ENCODE measurements at regions of chr6 and their contacts with region 1.

Region 1: DNA sequence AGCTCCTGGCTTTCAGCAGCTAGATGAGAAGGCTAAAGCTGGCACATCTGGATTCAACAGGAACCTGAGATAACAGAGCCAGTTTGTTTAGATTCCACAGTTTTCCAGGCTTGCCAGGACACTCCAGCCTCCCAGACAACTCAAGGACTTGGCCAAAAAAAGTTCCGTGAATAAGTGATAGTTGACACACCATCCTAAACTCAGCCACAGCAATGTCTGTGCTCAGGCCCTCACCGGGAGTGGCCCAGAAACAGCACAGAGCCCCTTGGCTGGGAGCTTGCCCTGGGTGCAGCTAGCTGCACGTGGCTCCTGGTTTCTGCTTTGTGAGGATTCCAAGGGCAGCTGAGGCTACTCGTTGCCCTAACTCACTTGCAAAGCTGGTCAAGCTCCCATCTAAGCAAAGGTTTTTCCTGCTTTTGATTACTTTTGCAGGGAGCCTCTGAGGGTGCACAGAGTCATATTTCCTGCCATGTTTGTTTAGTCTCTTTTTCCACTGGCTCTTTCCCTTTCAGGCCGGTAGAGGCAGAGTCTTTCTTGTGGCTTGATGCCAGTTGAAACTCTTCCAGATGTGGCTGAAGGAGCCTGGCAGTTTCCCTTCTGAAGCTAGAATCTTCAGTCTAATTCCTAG is 118.3 kb upstream of the ECI2 start:
- DNase-seq: peak; percentile 63
- H3K4me3 ChIP-seq: peak overlapping the region; percentile 14; the same call in 1 of the 2 replicates
- H3K27ac ChIP-seq: no peak overlapping the region
- H3K27me3 ChIP-seq: no peaks in the 10 kb centered on the region
- CTCF ChIP-seq: peak; percentile 76

Region 2: DNA sequence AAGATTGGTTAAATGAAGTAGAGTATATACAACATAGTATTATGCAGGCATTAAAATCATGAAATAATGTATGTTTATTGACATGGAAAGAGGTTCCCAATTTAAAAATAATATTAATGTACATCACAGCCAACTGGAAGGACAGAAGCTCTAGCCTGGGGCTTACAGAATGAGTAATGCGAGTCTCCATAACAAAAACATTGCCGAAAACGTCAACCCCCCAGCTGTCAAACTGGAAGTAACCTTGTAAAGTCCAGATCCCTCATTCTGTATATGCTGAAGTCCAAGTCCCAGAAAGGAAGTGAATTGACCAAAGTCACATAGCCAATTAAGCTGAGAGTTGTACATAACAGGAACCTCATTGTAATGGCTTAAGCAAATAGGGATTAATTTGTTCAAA is 10.4 kb after region 1 on chr6:
- CTCF ChIA-PET with region 1: interaction called, 11 read pairs
- POLR2A ChIA-PET with region 1: no interaction called
- DNase-seq: no peak
- H3K4me3 ChIP-seq: no peak overlapping the region
- H3K27ac ChIP-seq: no peak overlapping the region
- H3K27me3 ChIP-seq: peaks cover 4% of the 10 kb centered on the region
- CTCF ChIP-seq: no peak

Measured in AG04450 (cell line).